PC-3 (cell line): ENCODE measurements at regions of chr3 and their contacts with region 1.

Region 1: GRCh38 chr3:168511428-168512014 is 415.8 kb upstream of the GOLIM4 start:
- DNase-seq: peak; percentile 50
- ATAC-seq: peak; percentile 48
- H3K4me3 ChIP-seq: no peak overlapping the region
- H3K27ac ChIP-seq: no peak overlapping the region
- H3K4me1 ChIP-seq: no peaks in the 10 kb centered on the region
- H3K27me3 ChIP-seq: no peaks in the 10 kb centered on the region
- CTCF ChIP-seq: peak; percentile 84

Region 2: GRCh38 chr3:168213920-168214319 is 297.6 kb before region 1 on chr3:
- CTCF ChIA-PET with region 1: interaction called, 12 read pairs
- POLR2A ChIA-PET with region 1: no interaction called
- intact Hi-C with region 1: loop called (anchors 1 kb)
- DNase-seq: no peak
- ATAC-seq: no peak
- H3K4me3 ChIP-seq: no peak overlapping the region
- H3K27ac ChIP-seq: no peak overlapping the region
- H3K4me1 ChIP-seq: no peaks in the 10 kb centered on the region
- H3K27me3 ChIP-seq: no peaks in the 10 kb centered on the region
- CTCF ChIP-seq: no peak

Region 3: DNA sequence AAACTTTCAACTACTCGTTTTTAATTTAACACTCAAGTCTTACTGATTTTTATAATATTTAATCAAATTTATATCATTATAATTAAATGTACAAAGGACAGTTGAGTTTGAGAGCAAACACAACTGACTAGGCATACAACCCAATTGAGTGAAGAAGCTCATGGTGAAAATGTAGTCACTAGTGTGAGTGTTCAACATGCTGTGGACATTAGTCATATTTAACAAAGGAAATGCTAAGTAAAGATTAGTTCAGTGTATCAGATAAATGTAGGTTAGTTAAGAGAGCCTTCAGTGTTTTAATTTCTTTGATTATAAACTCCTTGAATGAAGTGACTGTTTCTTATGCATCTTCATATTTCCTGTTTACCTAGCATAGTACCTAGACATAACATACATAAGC is 28.4 kb after region 1 on chr3:
- CTCF ChIA-PET with region 1: no interaction called
- POLR2A ChIA-PET with region 1: no interaction called
- intact Hi-C with region 1: loop called (anchors 2 kb)
- DNase-seq: peak; percentile 32
- ATAC-seq: peak; percentile 95
- H3K4me3 ChIP-seq: no peak overlapping the region
- H3K27ac ChIP-seq: no peak overlapping the region
- H3K4me1 ChIP-seq: no peaks in the 10 kb centered on the region
- H3K27me3 ChIP-seq: no peaks in the 10 kb centered on the region
- CTCF ChIP-seq: no peak

Region 4: DNA sequence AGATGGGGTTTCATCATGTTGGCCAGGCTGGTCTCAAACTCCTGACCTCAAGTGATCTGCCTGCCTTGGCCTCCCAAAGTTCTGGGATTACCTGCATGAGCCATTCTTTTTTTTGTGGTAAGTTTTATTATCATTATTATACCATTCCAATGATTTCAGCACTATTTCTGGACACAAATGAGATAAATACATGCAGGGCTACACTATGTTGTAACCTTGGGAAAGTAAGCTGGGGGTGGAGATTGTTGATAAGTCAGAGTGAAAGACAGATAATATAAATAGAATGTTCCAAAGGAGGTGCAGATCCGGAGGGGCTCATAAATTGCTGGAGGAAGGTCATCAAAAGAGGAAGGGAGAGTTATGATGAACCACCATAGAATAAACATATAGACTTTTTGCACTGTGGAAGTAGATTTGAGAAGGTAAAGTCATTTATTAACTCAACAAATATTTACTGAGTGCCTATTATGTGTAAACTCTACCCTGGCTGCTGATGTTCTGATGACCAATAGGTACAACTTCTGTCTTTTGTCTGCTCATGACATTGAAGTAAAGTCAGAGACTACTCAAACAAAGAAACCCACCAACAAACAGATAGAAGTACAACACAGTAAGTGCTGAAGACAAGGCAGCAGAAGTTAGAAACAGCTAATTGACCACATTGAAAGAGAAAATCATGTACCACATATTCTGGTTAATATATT is 63.1 kb after region 1 on chr3:
- CTCF ChIA-PET with region 1: no interaction called
- POLR2A ChIA-PET with region 1: no interaction called
- intact Hi-C with region 1: loop called (anchors 2 kb)
- DNase-seq: peak; percentile 35
- ATAC-seq: peak; percentile 95
- H3K4me3 ChIP-seq: no peak overlapping the region
- H3K27ac ChIP-seq: no peak overlapping the region
- H3K4me1 ChIP-seq: no peaks in the 10 kb centered on the region
- H3K27me3 ChIP-seq: no peaks in the 10 kb centered on the region
- CTCF ChIP-seq: no peak

Region 5: DNA sequence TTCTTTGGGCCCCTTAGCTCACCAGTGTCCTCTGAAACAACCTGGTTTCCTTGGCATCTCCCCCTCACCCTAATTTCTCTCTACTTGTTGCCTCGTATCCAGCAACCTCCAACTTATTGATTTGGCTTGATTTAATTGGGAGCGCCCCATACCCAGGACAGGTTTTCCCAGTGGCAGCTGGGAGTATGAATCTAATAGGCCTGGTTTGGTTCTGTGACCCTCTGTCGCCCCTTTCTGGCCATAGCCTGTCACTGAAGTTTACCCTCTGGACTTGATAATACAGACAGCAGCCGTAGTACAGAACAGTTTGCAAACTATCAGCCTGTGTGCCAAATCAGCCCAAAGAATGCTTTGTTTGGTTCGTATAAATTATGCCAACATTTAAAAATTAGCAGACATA is 109.3 kb after region 1 on chr3:
- CTCF ChIA-PET with region 1: interaction called, 5 read pairs
- POLR2A ChIA-PET with region 1: no interaction called
- intact Hi-C with region 1: loop called (anchors 1 kb)
- DNase-seq: peak; percentile 58
- ATAC-seq: peak; percentile 69
- H3K4me3 ChIP-seq: no peak overlapping the region
- H3K27ac ChIP-seq: no peak overlapping the region
- H3K4me1 ChIP-seq: no peaks in the 10 kb centered on the region
- H3K27me3 ChIP-seq: 0 out of 2 replicates have a peak, but pooled peaks cover under 1% of the 10 kb centered on the region
- CTCF ChIP-seq: peak; percentile 77